ENCODE measurements at regions of chr12 and their contacts with region 1.

Region 1: DNA sequence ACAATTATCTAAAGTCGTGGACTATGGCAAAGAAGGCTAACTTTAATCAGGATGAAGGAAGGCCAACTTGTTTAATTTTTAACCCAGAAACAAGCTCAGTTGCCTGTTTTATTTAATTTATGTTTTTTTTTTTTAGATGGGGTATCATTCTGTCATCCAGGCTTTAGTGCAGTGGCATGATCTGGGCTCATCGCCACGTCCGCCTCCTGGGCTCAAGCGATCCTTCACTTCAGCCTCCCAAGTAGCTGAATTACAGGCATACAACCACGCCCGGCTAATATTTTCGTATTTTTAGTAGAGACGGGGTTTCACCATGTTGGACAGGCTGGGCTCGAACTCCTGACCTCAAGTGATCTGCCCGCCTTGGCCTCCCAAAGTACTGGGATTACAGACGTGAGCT is 19.7 kb downstream of the NUDT4 start:
- DNase-seq: no peak
- ATAC-seq: no peak
- H3K4me3 Mint-ChIP-seq: no peak overlapping the region
- H3K27ac Mint-ChIP-seq: no peak overlapping the region
- H3K4me1 Mint-ChIP-seq: peaks cover 11% of the 10 kb centered on the region
- H3K27me3 Mint-ChIP-seq: no peaks in the 10 kb centered on the region
- CTCF ChIP-seq: no peak

Region 2: GRCh38 chr12:92827836-92828431 is 569.5 kb before region 1 on chr12:
- CTCF ChIA-PET with region 1: interaction called, 6 read pairs
- POLR2A ChIA-PET with region 1: no interaction called
- intact Hi-C with region 1: loop called (anchors 2 kb)
- DNase-seq: no peak
- ATAC-seq: no peak
- H3K4me3 Mint-ChIP-seq: no peak overlapping the region
- H3K27ac Mint-ChIP-seq: no peak overlapping the region
- H3K4me1 Mint-ChIP-seq: no peaks in the 10 kb centered on the region
- H3K27me3 Mint-ChIP-seq: no peaks in the 10 kb centered on the region
- CTCF ChIP-seq: no peak

Region 3: DNA sequence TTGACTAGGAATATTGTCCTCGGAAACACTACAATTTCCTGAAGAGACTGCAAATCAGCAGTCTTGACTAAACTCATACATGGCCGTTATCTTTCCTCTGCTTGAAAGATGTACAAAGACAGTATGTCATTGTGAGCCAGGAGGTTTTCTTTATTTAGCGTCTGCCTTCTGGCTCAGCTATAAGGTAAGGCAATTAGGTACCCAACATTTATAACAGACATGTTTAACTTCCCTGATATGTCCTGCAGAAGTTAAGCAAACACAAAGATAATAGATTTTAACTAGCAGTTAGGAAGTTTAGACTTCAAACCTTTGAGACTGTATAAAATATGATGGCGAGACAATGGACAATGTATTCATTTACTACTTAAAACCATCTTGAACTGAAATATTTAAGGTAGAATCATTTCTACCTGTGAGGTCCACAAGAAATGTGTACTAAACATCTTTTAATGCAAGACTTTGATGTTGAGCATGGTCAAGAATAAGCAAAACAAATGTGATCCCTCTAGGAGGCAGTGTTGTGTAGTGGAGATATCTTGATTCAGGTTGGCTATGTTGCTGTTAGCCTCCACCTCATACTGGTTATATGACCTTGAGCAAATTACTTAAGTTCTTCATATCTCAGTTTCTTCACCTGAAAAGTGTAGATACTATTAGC is 372.1 kb before region 1 on chr12:
- CTCF ChIA-PET with region 1: interaction called, 13 read pairs
- POLR2A ChIA-PET with region 1: no interaction called
- intact Hi-C with region 1: loop called (anchors 2 kb)
- DNase-seq: no peak
- ATAC-seq: no peak
- H3K4me3 Mint-ChIP-seq: no peak overlapping the region
- H3K27ac Mint-ChIP-seq: no peak overlapping the region
- H3K4me1 Mint-ChIP-seq: no peaks in the 10 kb centered on the region
- H3K27me3 Mint-ChIP-seq: no peaks in the 10 kb centered on the region
- CTCF ChIP-seq: no peak

Region 4: GRCh38 chr12:93347054-93347776 is 50.2 kb before region 1 on chr12:
- CTCF ChIA-PET with region 1: no interaction called
- POLR2A ChIA-PET with region 1: no interaction called
- intact Hi-C with region 1: no loop called
- DNase-seq: no peak
- ATAC-seq: no peak
- H3K4me3 Mint-ChIP-seq: no peak overlapping the region
- H3K27ac Mint-ChIP-seq: no peak overlapping the region
- H3K4me1 Mint-ChIP-seq: no peaks in the 10 kb centered on the region
- H3K27me3 Mint-ChIP-seq: peaks cover 3% of the 10 kb centered on the region
- CTCF ChIP-seq: no peak

Region 5: DNA sequence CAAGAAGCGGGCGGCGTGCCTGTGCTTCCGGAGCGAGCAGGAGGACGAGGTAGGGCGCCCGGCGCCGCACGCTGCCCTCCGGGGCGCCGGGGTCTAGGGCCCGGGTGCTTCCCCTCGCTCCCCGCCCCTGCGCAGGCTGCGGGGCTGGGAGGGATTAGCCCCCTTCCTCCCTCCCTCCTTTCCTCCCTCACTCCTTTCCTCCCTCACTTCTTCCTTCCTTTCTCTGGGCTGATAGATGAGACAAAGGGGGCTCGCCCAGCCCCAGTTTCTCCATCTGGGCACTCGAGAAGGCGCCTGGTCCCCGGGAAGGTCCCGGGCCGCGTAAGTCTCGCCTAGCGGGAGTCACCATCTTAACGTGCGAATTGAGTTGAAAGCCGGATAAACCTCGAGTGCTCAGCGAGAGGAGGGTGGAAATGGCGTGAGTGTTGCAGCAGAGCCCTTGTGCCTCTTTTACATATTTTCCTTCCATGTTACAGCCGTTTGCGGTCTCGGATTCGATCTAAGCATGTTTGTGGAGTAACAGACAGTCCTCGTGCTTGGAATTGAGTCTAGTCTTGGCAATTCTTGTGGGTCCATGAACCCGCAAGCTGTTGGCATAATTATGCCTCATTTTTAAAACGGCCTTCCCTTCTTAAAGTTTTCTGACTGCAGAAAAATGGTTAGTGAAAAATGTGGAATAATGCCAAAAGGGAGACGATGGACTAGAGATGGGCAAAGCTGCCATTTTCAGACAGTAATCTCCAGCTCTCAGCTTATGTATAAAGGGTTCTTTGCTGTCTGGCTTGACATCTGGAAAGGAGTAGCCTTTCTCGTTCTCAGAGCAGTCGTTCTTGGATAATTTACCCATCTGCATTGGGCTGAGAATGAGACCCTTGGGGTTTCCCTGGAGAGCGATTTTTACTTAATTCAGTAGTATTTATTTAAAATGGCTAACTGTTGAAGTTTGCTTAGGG is 18.8 kb before region 1 on chr12:
- CTCF ChIA-PET with region 1: interaction called, 31 read pairs
- POLR2A ChIA-PET with region 1: no interaction called
- intact Hi-C with region 1: loop called (anchors 2 kb)
- DNase-seq: peak; percentile 57
- ATAC-seq: peak; percentile 40
- H3K4me3 Mint-ChIP-seq: peak overlapping the region; percentile 100
- H3K27ac Mint-ChIP-seq: peak overlapping the region; percentile 100
- H3K4me1 Mint-ChIP-seq: peaks cover 41% of the 10 kb centered on the region
- H3K27me3 Mint-ChIP-seq: no peaks in the 10 kb centered on the region
- CTCF ChIP-seq: no peak